Mammary epithelial cell (primary cell): ENCODE measurements at regions of chr1 and their contacts with region 1.

Region 1: GRCh38 chr1:209428241-209428921 is 155.1 kb upstream of the CAMK1G start:
- DNase-seq: peak; percentile 97
- H3K4me3 ChIP-seq: peak overlapping the region; percentile 52 to 98 (median 94)
- H3K27ac ChIP-seq: peak overlapping the region; percentile 99
- H3K4me1 ChIP-seq: peaks cover 41% of the 10 kb centered on the region
- H3K27me3 ChIP-seq: no peaks in the 10 kb centered on the region
- CTCF ChIP-seq: no peak

Region 2: GRCh38 chr1:209318181-209319056 is 110.0 kb before region 1 on chr1:
- CTCF ChIA-PET with region 1: interaction called, 10 read pairs
- dilution Hi-C with region 1: no loop called
- in situ Hi-C with region 1: no loop called
- intact Hi-C with region 1: no loop called
- DNase-seq: peak; percentile 55
- H3K4me3 ChIP-seq: no peak overlapping the region
- H3K27ac ChIP-seq: peak overlapping the region; percentile 29
- H3K4me1 ChIP-seq: peaks cover 19% of the 10 kb centered on the region
- H3K27me3 ChIP-seq: no peaks in the 10 kb centered on the region
- CTCF ChIP-seq: no peak

Region 3: DNA sequence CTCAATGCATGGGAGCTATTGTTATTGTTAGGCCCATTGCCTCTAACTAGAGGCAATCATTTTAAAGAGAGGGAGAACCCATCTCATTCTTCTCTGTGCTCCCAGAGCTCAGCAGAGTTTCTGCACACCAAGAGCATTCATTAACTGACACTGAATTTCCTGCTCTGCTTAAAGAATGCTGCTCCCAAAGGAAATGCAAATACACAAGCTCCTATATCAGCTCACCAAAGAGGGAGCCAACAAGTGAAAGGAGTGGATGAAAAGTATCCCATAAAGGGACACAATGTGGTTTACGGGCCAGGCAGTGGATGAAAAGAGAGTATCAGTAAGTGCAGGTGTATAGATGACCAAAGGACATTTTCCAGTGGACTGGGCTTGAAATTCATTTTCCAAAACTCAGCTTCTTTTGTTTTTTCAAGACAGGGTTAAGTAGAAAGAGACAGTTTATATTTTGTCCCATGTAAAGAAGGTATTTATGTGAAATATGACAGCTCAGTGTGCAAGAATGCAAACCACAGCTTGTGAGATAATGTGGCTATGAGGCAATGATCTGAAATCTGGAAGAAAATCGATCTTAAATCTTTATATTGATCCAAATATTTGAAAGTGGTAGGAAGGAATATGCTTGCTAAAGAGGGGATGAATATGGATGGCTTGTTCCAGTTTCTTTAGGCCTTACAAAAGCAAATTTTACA is 52.6 kb before region 1 on chr1:
- CTCF ChIA-PET with region 1: interaction called, 3 read pairs
- dilution Hi-C with region 1: loop called (anchors 10 kb)
- in situ Hi-C with region 1: loop called in 1 of 2 experiments (anchors 5 kb)
- intact Hi-C with region 1: no loop called
- DNase-seq: peak; percentile 42
- H3K4me3 ChIP-seq: no peak overlapping the region
- H3K27ac ChIP-seq: peak overlapping the region; percentile 66
- H3K4me1 ChIP-seq: peaks cover 47% of the 10 kb centered on the region
- H3K27me3 ChIP-seq: no peaks in the 10 kb centered on the region
- CTCF ChIP-seq: no peak

Region 4: DNA sequence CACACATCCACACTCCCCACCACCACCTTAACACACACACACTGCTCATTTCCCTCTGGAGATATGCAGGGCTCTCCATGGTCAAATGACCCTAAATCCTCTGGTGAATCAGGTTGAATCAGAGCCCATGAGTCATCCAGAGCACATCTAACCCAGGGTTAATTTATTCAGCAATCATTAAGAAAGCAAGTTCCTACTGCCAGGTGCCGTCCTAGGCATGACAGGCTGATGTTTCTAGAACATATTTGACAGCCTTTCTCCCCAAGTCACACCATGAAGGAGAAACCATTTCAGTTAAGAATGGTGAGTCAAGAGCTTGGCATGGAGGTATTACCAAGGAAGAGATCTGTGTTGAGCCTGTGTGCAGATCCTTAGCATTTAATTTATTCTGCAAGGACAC is 39.1 kb before region 1 on chr1:
- CTCF ChIA-PET with region 1: no interaction called
- dilution Hi-C with region 1: no loop called
- in situ Hi-C with region 1: loop called in 1 of 2 experiments (anchors 5 kb)
- intact Hi-C with region 1: loop called (anchors 1 kb)
- DNase-seq: peak; percentile 98
- H3K4me3 ChIP-seq: no peak overlapping the region
- H3K27ac ChIP-seq: peak overlapping the region; percentile 98
- H3K4me1 ChIP-seq: peaks cover 64% of the 10 kb centered on the region
- H3K27me3 ChIP-seq: no peaks in the 10 kb centered on the region
- CTCF ChIP-seq: no peak

Region 5: DNA sequence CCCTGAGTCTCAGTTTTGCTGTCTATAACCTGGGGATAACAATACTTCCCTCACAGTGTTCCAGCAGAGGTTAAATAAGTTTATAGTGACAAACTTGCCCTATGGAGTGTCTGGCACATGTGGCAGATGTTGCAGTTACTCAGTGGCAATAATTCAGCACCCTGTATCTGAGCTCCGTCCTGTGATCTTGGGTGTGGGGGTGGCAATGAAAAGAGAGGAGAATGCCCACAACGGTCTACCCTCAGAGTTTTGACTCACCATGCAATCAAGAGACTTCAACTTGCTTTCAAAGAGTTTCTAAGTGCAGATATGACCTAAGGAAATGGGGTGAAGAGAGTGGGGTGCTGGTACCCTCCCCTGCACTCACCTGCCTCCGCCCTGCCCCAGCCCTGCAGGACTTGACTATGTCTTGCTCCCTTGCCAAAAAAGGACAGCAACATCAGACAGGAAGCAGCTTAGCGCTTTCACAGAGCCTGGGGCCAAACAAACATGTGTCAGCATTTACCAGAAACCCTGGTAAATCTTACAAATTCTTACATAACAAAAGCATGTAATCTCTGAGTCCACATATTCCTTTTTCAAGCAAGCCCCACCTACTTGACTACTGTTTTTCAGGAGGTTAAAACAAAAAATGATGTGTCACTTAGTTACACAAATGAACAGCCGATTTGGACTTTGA is 29.9 kb before region 1 on chr1:
- CTCF ChIA-PET with region 1: no interaction called
- dilution Hi-C with region 1: no loop called
- in situ Hi-C with region 1: no loop called
- intact Hi-C with region 1: loop called (anchors 1 kb)
- DNase-seq: peak; percentile 98
- H3K4me3 ChIP-seq: no peak overlapping the region
- H3K27ac ChIP-seq: peak overlapping the region; percentile 99
- H3K4me1 ChIP-seq: peaks cover 63% of the 10 kb centered on the region
- H3K27me3 ChIP-seq: no peaks in the 10 kb centered on the region
- CTCF ChIP-seq: no peak

Region 6: GRCh38 chr1:209411491-209411929 is 16.9 kb before region 1 on chr1:
- CTCF ChIA-PET with region 1: interaction called, 8 read pairs
- dilution Hi-C with region 1: no loop called
- in situ Hi-C with region 1: no loop called
- intact Hi-C with region 1: loop called (anchors 1 kb)
- DNase-seq: peak; percentile 97
- H3K4me3 ChIP-seq: peak overlapping the region in 1 of 3 experiments; percentile 12
- H3K27ac ChIP-seq: peak overlapping the region; percentile 100
- H3K4me1 ChIP-seq: peaks cover 78% of the 10 kb centered on the region
- H3K27me3 ChIP-seq: no peaks in the 10 kb centered on the region
- CTCF ChIP-seq: no peak

Region 7: DNA sequence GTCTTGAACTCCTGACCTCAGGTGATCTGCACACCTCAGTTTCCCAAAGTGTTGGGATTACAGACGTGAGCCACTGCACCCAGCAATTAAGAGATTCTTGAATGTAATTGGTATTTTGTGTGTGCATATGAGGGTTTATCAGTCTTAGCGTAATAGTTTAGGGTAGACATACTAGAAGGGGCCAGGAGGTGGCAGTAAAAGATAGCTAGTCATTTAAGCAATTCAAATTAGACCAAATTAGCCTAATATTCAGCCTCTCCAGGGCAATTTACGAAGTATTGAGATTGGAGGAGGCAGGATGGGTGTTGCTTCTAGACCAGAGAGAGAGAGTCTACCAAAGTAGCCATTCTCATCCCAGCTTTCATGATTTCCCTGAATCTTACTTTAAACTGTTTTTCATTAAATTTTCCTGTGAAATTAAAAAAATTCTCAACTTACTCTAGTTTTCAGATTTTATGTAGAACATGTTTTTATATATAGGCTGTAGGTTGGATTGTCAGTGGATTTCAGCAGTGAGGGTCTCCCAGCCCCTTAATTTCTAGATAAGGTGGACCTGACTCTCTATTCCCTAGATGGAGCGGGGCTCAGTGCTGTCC is 1020.0 kb after region 1 on chr1:
- CTCF ChIA-PET with region 1: no interaction called
- dilution Hi-C with region 1: no loop called
- in situ Hi-C with region 1: no loop called
- intact Hi-C with region 1: no loop called
- DNase-seq: peak; percentile 18
- H3K4me3 ChIP-seq: no peak overlapping the region
- H3K27ac ChIP-seq: no peak overlapping the region
- H3K4me1 ChIP-seq: no peaks in the 10 kb centered on the region
- H3K27me3 ChIP-seq: no peaks in the 10 kb centered on the region
- CTCF ChIP-seq: peak; percentile 63 to 68